Right ventricle myocardium inferior (tissue), 1 donor: ENCODE measurements at regions of chr18 and their contacts with region 1.

Region 1: GRCh38 chr18:7658712-7659111 is 91.6 kb downstream of the PTPRM start:
- DNase-seq: no peak
- ATAC-seq: no peak

Region 2: GRCh38 chr18:7850446-7850845 is 191.7 kb after region 1 on chr18:
- intact Hi-C with region 1: loop called (anchors 5 kb)
- DNase-seq: no peak
- ATAC-seq: no peak